AG04450 (cell line): ENCODE measurements at regions of chr1 and their contacts with region 1.

Region 1: GRCh38 chr1:45303582-45304310 is 22.9 kb upstream of the HPDL start:
- DNase-seq: peak; percentile 93
- H3K4me3 ChIP-seq: peak overlapping the region; percentile 78
- H3K27ac ChIP-seq: peak overlapping the region; percentile 86
- H3K27me3 ChIP-seq: no peaks in the 10 kb centered on the region
- CTCF ChIP-seq: peak; percentile 69

Region 2: DNA sequence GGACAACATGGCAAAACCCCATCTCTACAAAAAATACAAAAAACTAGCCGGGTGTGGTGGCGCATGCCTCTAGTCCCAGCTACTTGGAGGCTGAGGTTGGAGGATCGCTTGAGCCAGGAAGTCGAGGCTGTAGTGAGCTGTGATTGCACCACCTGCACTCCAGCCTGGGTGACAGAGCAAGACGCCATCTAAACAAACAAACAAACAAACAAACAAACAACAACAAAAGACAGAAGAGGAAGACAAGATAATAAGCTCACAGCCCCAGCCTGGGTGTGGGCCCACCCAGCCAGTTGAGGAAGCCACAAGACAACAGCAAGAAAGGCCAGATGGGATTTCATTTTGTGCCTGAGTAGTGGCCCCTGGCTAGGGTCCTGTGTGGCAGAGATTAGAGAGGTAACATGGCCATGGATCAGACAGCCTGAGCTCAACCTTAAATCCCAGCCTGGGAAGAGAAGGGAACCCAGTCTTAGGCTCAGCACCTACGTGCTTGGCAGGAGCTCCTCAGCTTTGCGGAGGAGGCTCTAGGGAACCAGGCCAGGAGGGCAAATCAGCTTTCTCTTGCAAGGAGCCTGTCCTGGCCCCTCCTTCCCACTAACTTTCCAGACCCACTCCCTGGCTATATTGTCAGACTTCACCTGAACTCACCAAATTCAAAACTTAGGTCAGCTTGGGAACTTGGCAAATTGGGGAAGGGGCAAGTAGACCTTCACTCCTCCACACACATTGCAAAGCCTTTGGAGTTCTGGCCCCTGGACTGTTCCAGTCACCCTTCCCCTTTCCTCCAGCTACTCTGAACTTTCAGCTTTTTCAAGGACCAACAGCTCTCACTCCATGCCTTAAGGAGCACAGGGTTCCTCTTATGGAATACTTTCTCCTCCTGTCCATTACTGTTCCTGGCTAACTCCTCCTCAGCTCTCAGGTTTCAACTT is 510.7 kb before region 1 on chr1:
- CTCF ChIA-PET with region 1: interaction called, 12 read pairs
- POLR2A ChIA-PET with region 1: no interaction called
- DNase-seq: no peak
- H3K4me3 ChIP-seq: no peak overlapping the region
- H3K27ac ChIP-seq: no peak overlapping the region
- H3K27me3 ChIP-seq: no peaks in the 10 kb centered on the region
- CTCF ChIP-seq: no peak

Region 3: DNA sequence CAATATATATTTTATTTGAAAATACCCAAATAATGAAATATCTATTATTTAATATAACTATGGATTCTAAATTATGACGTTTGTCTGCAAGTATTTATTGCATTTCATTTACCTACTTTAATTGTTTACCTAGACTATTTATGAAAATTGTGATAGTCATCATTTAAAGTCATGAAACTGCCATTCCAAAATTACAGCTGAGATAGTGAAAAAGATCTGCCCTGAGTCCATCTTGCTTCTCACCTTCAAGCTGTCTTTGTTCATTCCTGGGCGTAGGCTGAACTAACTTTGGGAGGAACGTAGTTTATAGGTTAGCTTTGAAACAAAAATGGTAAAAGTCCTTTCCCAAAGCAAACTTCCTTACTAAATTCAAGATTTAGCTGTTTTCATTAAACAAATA is 10.5 kb after region 1 on chr1:
- CTCF ChIA-PET with region 1: interaction called, 10 read pairs
- POLR2A ChIA-PET with region 1: no interaction called
- DNase-seq: no peak
- H3K4me3 ChIP-seq: no peak overlapping the region
- H3K27ac ChIP-seq: no peak overlapping the region
- H3K27me3 ChIP-seq: peaks cover 6% of the 10 kb centered on the region
- CTCF ChIP-seq: no peak

Region 4: DNA sequence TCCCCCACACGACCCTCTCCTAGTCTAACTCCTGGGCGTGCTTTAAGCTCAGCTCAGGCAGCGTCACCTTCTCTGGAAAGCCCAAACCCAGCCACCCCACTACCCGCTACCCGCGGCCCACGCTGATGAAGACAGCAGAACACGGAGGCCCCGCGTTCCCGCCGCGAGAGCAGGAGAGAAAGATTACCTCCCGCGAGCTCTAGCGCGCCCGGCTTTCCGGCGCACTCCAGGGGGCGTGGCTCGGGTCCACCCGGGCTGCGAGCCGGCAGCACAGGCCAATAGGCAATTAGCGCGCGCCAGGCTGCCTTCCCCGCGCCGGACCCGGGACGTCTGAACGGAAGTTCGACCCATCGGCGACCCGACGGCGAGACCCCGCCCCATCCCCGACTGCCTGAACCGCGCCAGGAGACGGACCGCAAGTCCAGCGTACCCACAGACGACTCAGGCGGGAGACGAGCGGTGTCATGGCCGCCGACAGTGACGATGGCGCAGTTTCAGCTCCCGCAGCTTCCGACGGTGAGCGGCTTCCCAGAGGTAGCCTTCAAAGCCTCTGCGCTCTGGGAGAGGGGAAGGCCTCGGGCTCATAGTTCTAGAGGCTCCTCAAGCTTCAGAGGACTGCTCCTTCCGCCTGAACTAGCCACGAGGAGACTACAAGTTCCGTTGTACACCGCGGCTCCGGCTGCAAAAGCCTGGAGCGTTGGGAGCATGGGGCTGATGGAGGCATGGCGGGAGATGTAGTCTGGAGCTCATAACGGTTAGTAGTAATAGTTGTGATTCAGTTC is 36.2 kb after region 1 on chr1 and contains the starts of genes MUTYH and TOE1:
- CTCF ChIA-PET with region 1: interaction called, 18 read pairs
- POLR2A ChIA-PET with region 1: interaction called, 32 read pairs
- DNase-seq: peak; percentile 70
- H3K4me3 ChIP-seq: peak within 1 kb of the TSS; percentile 73
- H3K27ac ChIP-seq: peak within 1 kb of the TSS; percentile 94
- H3K27me3 ChIP-seq: no peaks in the 10 kb centered on the region
- CTCF ChIP-seq: peak; percentile 11; the same call in 1 of the 2 replicates
- polyA plus RNA-seq, gene MUTYH: 5.8 and 6.2 TPM in 2 replicates
- polyA plus RNA-seq, gene TOE1: 8.1 and 10.1 TPM in 2 replicates

Region 5: DNA sequence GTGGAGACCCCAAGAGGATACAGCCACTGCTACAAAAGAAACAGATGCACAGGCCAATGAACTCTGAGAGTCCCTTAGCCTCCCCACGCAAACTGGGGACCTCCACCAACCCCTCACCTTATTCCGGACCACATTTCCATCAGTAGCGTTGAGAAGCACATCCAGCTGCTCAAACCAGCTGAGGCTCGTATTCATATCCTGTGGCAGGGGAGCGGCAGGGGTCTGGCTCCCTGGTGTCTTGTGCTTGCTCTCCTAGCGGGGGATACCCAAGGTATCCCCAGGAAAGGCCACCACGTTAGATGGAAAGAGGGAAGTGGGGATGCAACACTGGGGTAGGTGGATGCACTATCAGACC is 195.6 kb after region 1 on chr1:
- CTCF ChIA-PET with region 1: interaction called, 7 read pairs
- POLR2A ChIA-PET with region 1: interaction called, 10 read pairs
- DNase-seq: no peak
- H3K4me3 ChIP-seq: peak overlapping the region; percentile 87
- H3K27ac ChIP-seq: no peak overlapping the region
- H3K27me3 ChIP-seq: no peaks in the 10 kb centered on the region
- CTCF ChIP-seq: no peak